Endothelial cell of umbilical vein (primary cell): ENCODE measurements at regions of chr12 and their contacts with region 1.

Region 1: GRCh38 chr12:4604684-4605193 is 42.7 kb downstream of the DYRK4 start:
- DNase-seq: peak; percentile 89
- H3K4me3 ChIP-seq: peak overlapping the region; percentile 57 to 82 (median 77)
- H3K27ac ChIP-seq: peak overlapping the region; percentile 3
- H3K4me1 ChIP-seq: peaks cover 13% of the 10 kb centered on the region
- H3K27me3 ChIP-seq: peaks cover 10 to 21% of the 10 kb centered on the region in 2 experiments
- CTCF ChIP-seq: peak; percentile 95 to 96
- POLR2A ChIP-seq: no peak

Region 2: DNA sequence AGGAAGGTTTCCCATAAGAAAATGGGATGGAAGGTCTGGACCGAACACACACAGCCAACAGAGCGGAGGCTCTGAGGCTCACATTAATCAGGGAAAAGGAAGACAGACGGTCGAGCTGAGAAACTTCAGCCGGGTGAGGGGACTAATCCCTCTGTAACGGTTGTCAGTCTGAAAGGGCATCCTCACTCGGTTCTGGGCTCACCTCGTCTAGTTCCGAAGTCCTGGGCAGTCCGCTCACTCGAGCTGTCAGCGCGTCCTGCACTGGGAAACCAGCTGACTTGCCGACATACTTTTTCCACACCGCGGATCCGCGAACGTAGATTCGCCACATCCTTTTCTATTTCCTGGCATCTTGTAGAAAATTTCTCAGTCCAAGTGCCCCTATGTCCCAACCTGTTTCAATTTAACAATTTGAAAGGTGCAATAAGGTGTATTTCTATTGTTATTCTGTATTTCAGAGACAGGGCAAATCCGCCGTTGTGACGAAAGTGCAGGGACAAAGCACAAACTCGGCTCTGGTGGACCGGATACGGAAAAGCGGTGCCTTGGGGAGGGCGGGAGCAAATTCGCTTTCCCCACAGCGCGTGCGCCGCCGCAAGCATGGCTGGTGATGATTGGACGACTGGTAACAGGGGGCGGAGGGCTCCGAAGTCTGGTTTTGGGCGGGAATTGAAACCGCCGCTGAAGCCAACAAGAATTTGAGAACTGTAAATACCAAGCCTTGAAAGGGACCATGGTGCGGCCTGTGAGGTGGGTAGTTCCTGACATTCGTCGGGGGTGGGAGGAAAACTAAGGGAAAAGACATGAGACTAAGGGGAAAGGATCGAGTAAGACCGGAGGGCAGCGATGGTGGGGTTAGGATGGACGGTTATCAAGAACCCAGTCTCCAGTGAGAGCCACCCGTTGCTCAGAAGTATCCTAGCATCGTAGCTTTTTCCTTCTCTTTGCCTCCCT is 66.3 kb before region 1 on chr12 and contains the start of gene RAD51AP1:
- CTCF ChIA-PET with region 1: interaction called, 6 read pairs
- POLR2A ChIA-PET with region 1: no interaction called
- dilution Hi-C with region 1: no loop called
- intact Hi-C with region 1: loop called (anchors 2 kb)
- DNase-seq: peak; percentile 98
- H3K4me3 ChIP-seq: peak within 1 kb of the TSS; percentile 76 to 99 (median 97)
- H3K27ac ChIP-seq: peak within 1 kb of the TSS; percentile 98
- H3K4me1 ChIP-seq: peaks cover 23% of the 10 kb centered on the region
- H3K27me3 ChIP-seq: no peaks in the 10 kb centered on the region
- CTCF ChIP-seq: no peak
- POLR2A ChIP-seq: peak; percentile 18
- total RNA-seq, gene RAD51AP1: 23.1 and 23.4 TPM in 2 replicates

Region 3: GRCh38 chr12:4579305-4580102 is 25.2 kb before region 1 on chr12:
- CTCF ChIA-PET with region 1: interaction called, 10 read pairs
- POLR2A ChIA-PET with region 1: no interaction called
- dilution Hi-C with region 1: no loop called
- intact Hi-C with region 1: no loop called
- DNase-seq: peak; percentile 26
- H3K4me3 ChIP-seq: no peak overlapping the region
- H3K27ac ChIP-seq: no peak overlapping the region
- H3K4me1 ChIP-seq: peaks cover 12% of the 10 kb centered on the region
- H3K27me3 ChIP-seq: peaks cover 4 to 7% of the 10 kb centered on the region in 2 experiments
- CTCF ChIP-seq: no peak
- POLR2A ChIP-seq: no peak

Region 4: DNA sequence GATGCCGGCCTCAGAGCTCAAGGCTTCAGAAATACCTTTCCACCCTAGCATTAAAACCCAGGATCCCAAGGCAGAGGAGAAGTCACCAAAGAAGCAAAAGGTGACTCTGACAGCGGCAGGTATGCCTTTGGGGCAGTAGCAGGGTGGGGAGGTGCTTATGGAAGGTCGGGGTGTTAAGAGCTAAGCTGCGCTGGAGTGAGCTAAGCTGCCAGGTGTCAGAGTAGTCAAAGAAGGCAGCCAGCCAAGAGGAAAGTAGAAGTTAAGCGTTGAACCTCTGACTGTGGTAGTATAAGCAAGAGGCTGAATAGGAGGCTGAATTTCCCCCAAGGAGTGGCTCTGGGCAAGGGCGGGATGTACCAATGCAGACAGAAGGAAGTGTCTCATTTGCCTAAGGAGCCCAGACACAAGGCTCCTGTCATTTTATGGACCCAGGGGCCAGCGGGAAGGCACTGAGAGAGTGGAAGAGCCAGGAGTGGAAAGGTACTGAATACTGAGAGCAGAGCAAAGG is 13.5 kb before region 1 on chr12:
- CTCF ChIA-PET with region 1: interaction called, 13 read pairs
- POLR2A ChIA-PET with region 1: no interaction called
- dilution Hi-C with region 1: no loop called
- intact Hi-C with region 1: no loop called
- DNase-seq: no peak
- H3K4me3 ChIP-seq: no peak overlapping the region
- H3K27ac ChIP-seq: no peak overlapping the region
- H3K4me1 ChIP-seq: no peaks in the 10 kb centered on the region
- H3K27me3 ChIP-seq: peaks cover 5% of the 10 kb centered on the region in 2 experiments
- CTCF ChIP-seq: no peak
- POLR2A ChIP-seq: no peak

Region 5: GRCh38 chr12:4615667-4616066 is 10.9 kb after region 1 on chr12:
- CTCF ChIA-PET with region 1: no interaction called
- POLR2A ChIA-PET with region 1: no interaction called
- dilution Hi-C with region 1: no loop called
- intact Hi-C with region 1: no loop called
- DNase-seq: no peak
- H3K4me3 ChIP-seq: no peak overlapping the region
- H3K27ac ChIP-seq: no peak overlapping the region
- H3K4me1 ChIP-seq: no peaks in the 10 kb centered on the region
- H3K27me3 ChIP-seq: no peaks in the 10 kb centered on the region
- CTCF ChIP-seq: no peak
- POLR2A ChIP-seq: no peak

Region 6: GRCh38 chr12:4648501-4649357 is 44.0 kb after region 1 on chr12 and contains the starts of genes AKAP3 and NDUFA9:
- CTCF ChIA-PET with region 1: interaction called, 12 read pairs
- POLR2A ChIA-PET with region 1: no interaction called
- dilution Hi-C with region 1: no loop called
- intact Hi-C with region 1: loop called (anchors 1 kb)
- DNase-seq: peak; percentile 93
- H3K4me3 ChIP-seq: peak within 1 kb of the TSS; percentile 58 to 97 (median 96)
- H3K27ac ChIP-seq: peak within 1 kb of the TSS; percentile 79
- H3K4me1 ChIP-seq: peaks cover 16% of the 10 kb centered on the region
- H3K27me3 ChIP-seq: no peaks in the 10 kb centered on the region
- CTCF ChIP-seq: no peak
- POLR2A ChIP-seq: peak; percentile 73
- total RNA-seq, gene AKAP3: 0.62 TPM in 1 of 2 replicates, not detected in the other
- total RNA-seq, gene NDUFA9: 113 and 115 TPM in 2 replicates

Region 7: GRCh38 chr12:4763549-4763948 is 158.8 kb after region 1 on chr12:
- CTCF ChIA-PET with region 1: interaction called, 13 read pairs
- POLR2A ChIA-PET with region 1: no interaction called
- dilution Hi-C with region 1: no loop called
- intact Hi-C with region 1: loop called (anchors 1 kb)
- DNase-seq: no peak
- H3K4me3 ChIP-seq: no peak overlapping the region
- H3K27ac ChIP-seq: no peak overlapping the region
- H3K4me1 ChIP-seq: no peaks in the 10 kb centered on the region
- H3K27me3 ChIP-seq: peaks cover 0 to 2% of the 10 kb centered on the region in 2 experiments
- CTCF ChIP-seq: no peak
- POLR2A ChIP-seq: no peak